Right ventricle myocardium inferior (tissue), 1 donor: ENCODE measurements at regions of chr4 and their contacts with region 1.

Region 1: DNA sequence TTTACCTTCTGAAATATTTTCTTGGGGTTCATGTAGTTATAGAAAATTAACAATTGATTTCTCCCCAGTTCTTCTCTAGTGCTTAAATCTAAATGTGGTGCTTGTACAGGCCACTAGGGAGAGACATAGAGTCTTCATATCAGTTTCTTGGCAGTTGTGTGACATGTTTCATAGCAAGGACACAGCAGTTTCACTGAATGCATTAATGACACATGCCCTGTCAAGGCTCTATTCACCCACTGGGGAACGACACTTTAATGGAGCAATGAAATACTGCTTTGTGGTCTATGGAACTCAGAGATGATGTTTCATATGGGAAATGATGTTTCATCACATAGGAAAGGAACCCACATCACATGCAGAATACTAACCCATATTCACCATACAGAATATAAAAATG is 2.8 kb downstream of the VEGFC start:
- DNase-seq: no peak
- ATAC-seq: no peak

Region 2: DNA sequence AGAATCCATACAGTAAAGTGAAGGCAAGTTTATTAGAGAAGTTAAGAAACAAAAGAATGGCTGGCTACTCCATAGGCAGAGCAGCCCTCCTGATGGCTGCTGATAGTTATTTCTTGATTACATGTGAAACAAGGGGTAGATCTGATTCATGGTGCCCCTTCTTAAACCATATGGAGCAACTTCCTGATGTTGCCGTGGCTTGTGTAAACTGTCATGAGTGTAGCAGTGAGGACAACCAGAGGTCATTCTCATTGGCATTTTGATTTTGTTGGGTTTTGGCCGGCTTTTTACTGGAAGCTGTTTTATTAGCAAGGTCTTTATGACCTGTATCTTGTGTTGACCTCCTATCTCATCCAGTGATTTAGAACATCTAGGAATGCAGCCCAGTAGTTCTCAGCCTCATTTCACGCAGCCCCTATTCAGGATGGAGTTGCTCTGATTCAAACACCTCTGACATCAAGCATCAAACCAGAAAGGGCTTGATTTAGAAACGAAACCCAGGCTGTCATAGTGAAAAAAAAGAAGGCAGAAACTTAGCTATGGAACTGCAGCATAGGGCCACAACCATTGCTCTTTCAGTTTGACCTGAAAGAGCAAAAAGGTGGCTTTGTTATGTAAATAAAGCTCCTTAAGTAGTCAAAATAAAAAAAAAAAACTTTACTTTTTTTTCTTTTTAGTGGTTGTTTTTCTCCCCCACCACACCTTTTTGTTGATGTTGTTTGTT is 432.4 kb before region 1 on chr4:
- intact Hi-C with region 1: no loop called
- DNase-seq: no peak
- ATAC-seq: no peak

Region 3: DNA sequence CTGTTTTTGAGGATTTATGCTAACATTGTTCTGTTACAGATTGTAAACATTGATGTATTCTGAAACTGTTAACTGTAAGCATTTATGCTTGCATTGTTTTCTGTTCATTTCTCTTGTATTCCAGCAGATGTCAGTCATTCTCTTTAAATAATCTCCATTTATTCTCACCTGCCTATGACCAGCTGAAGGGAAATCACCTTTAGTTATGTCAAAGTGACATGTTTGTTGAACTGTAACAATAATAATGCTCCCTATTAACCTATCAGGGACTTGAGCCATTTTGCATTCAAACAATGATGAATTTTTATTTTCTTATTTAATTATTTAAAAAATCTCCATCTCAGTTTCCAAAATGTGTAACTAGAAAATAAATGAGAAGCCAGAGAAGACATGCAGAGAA is 412.2 kb before region 1 on chr4:
- intact Hi-C with region 1: loop called (anchors 5 kb)
- DNase-seq: no peak
- ATAC-seq: no peak

Region 4: GRCh38 chr4:176563591-176563990 is 226.4 kb before region 1 on chr4:
- intact Hi-C with region 1: loop called (anchors 2 kb)
- DNase-seq: no peak
- ATAC-seq: no peak

Region 5: GRCh38 chr4:176642472-176642871 is 147.5 kb before region 1 on chr4:
- intact Hi-C with region 1: no loop called
- DNase-seq: no peak
- ATAC-seq: no peak

Region 6: DNA sequence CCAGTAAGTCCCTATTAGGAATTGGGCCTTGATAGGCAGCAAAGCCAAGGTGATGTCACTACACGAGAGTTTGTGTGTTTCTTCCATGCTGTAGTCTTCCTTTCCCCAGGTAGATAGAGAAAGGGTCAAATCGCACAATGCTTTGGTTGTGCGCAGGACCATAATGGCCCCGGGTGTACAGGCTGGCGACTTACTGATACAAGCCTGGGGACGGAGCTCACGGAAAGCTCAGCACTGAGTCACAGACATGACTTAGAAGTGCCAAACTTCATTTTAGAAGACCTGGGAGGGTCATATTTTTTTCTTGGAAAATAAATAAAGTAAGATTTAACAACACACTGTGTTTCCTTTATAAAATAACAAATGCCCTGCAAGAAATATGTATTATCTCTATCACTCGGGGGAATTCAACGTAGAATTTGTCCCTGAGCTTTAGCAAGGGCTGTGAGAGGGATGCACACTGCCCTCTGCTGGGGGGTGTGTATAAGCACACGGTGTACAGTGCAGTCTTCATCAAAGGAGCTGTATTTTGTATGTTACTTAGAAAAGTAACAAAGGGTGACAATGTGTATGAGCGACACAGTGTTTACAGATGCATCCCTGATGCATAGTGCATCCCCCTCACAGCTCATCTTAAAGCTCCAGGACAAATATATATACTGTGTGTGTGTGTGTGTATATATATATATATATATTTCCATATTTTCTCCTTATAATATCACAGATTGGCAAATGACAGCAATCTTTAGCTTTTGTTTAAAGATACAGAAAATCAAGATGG is 257.3 kb after region 1 on chr4:
- intact Hi-C with region 1: loop called (anchors 5 kb)
- DNase-seq: no peak
- ATAC-seq: peak; percentile 78